Endothelial cell of umbilical vein (primary cell): ENCODE measurements at regions of chr6 and their contacts with region 1.

Region 1: DNA sequence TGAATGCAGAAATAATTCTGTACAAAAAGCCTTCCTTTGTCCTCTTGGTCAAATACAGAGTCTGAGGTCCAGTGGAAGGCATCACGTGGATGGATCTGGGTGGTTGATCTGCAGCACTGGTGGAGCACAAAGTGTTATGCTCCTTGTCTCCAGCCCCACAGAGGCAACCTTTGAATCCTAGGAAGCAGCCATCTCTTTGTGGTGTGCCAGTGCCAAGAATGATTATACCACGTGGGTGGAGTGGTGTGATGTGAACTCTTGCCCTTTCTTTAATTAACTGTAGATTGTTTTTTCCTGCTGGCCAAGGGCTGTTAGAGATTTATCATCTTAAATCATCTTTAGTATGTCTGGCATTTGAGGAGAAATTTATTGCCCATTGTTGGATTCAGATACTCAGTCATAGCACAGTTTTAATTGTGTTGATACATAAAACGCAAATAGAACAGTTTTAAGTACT is 31.1 kb downstream of the NCOA7 start:
- DNase-seq: peak; percentile 99
- H3K4me3 ChIP-seq: no peak overlapping the region
- H3K27ac ChIP-seq: peak overlapping the region; percentile 81
- H3K4me1 ChIP-seq: peaks cover 49% of the 10 kb centered on the region
- H3K27me3 ChIP-seq: no peaks in the 10 kb centered on the region
- CTCF ChIP-seq: no peak
- POLR2A ChIP-seq: peak; percentile 61

Region 2: DNA sequence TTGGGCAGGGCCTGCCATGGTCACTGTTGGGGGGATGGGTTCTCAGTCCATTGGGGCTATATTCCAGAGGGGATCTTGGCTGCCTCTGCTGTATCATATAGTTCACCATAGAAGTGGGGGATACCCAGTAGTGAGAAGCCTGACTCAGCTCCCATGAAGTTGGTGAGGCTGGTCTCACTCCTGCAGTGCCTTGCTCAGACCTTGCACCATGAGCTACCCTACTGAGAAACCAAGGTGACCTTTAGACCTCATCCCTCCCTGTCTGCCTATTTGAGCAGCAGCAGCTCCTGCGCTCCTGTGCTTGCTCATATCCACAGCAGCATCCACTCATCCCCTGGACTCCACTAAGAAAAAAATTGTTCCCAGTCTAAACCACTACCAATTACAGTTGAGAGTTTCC is 128.4 kb before region 1 on chr6:
- CTCF ChIA-PET with region 1: no interaction called
- POLR2A ChIA-PET with region 1: no interaction called
- dilution Hi-C with region 1: no loop called
- intact Hi-C with region 1: no loop called
- DNase-seq: no peak
- H3K4me3 ChIP-seq: no peak overlapping the region
- H3K27ac ChIP-seq: no peak overlapping the region
- H3K4me1 ChIP-seq: no peaks in the 10 kb centered on the region
- H3K27me3 ChIP-seq: peaks cover 3 to 5% of the 10 kb centered on the region in 2 experiments
- CTCF ChIP-seq: no peak
- POLR2A ChIP-seq: no peak

Region 3: GRCh38 chr6:125802943-125803377 is 18.9 kb before region 1 on chr6:
- CTCF ChIA-PET with region 1: no interaction called
- POLR2A ChIA-PET with region 1: no interaction called
- dilution Hi-C with region 1: no loop called
- intact Hi-C with region 1: loop called (anchors 1 kb)
- DNase-seq: peak; percentile 96
- H3K4me3 ChIP-seq: peak overlapping the region in 1 of 3 experiments; percentile 20
- H3K27ac ChIP-seq: peak overlapping the region; percentile 95
- H3K4me1 ChIP-seq: peaks cover 33% of the 10 kb centered on the region
- H3K27me3 ChIP-seq: no peaks in the 10 kb centered on the region
- CTCF ChIP-seq: no peak
- POLR2A ChIP-seq: no peak

Region 4: GRCh38 chr6:125839471-125839870 is 17.6 kb after region 1 on chr6:
- CTCF ChIA-PET with region 1: interaction called, 5 read pairs
- POLR2A ChIA-PET with region 1: no interaction called
- dilution Hi-C with region 1: no loop called
- intact Hi-C with region 1: loop called (anchors 1 kb)
- DNase-seq: peak; percentile 79
- H3K4me3 ChIP-seq: no peak overlapping the region
- H3K27ac ChIP-seq: peak overlapping the region; percentile 65
- H3K4me1 ChIP-seq: peaks cover 33% of the 10 kb centered on the region
- H3K27me3 ChIP-seq: no peaks in the 10 kb centered on the region
- CTCF ChIP-seq: no peak
- POLR2A ChIP-seq: no peak